ENCODE measurements at regions of chr2 and their contacts with region 1.

Region 1: DNA sequence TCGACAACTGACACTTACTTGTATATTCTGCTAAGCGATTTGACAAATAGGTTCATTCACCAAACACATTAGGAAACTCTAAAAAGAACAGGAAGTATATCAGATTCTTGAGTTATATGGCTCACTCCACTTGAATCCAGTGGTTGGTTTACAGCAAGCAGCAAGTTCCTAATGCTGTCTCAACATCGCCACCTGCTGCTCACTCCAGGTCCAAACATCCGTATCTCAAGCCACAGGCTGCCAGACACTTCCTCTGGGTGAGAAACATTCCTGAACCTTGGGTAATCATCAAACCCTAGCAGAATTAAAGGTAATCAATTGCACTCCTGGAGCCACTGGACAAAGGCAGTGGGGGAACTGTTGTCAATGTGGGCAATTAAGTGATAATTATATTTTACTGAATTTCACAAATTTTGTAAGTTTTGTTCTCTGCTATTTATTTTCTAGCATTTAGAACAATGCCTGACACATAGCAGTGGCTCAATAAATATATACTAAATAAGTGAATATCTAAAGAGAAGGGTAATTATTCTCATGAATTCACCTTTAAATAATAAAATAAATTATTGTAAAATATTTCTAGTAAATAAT is 107.1 kb upstream of the TTN start:
- DNase-seq: peak; percentile 41 to 79 (median 62)
- ATAC-seq: peak; percentile 72
- H3K4me3 ChIP-seq: no peak overlapping the region
- H3K4me3 Mint-ChIP-seq: no peak overlapping the region
- H3K27ac ChIP-seq: no peak overlapping the region
- H3K27ac Mint-ChIP-seq: no peak overlapping the region
- H3K4me1 ChIP-seq: no peaks in the 10 kb centered on the region
- H3K4me1 Mint-ChIP-seq: peaks cover 5% of the 10 kb centered on the region
- H3K27me3 ChIP-seq: no peaks in the 10 kb centered on the region
- H3K27me3 Mint-ChIP-seq: no peaks in the 10 kb centered on the region
- CTCF ChIP-seq: peak; percentile 81

Region 2: DNA sequence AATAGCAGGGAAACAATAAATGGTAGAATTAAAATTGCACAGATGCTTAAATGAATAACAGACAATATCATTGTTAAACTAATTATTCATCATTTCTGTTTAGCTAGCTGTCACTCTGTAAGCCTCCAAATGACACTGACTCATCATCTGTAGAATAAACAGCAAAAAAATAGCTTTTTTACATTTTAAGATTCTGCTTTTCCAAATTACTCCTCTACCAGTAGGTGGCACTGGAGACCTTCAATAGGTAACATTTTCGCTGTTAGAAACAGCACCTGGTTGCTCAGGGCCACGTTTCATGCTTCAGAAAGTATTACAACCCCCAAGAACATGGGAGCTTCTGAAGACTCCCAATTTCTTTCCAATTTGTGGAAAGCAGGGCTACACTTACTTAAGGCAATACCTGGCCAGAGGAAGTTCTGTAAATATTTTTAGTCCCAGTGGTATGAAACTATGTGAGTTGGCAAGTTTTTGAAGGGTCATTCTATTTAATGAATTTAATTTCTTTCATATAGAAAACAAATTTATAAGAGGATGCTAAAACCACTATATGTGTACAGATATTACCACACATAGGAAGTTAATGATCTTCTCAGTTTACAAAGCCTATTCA is 152.5 kb before region 1 on chr2:
- CTCF ChIA-PET with region 1: no interaction called
- POLR2A ChIA-PET with region 1: no interaction called
- intact Hi-C with region 1: loop called in 1 of 2 experiments (anchors 10 kb)
- DNase-seq: peak in 6 of 14 experiments; percentile 0 to 57 (median 32)
- ATAC-seq: peak; percentile 41
- H3K4me3 ChIP-seq: no peak overlapping the region
- H3K4me3 Mint-ChIP-seq: no peak overlapping the region
- H3K27ac ChIP-seq: no peak overlapping the region
- H3K27ac Mint-ChIP-seq: no peak overlapping the region
- H3K4me1 ChIP-seq: no peaks in the 10 kb centered on the region
- H3K4me1 Mint-ChIP-seq: no peaks in the 10 kb centered on the region
- H3K27me3 ChIP-seq: no peaks in the 10 kb centered on the region
- H3K27me3 Mint-ChIP-seq: no peaks in the 10 kb centered on the region
- CTCF ChIP-seq: peak; percentile 85

Region 3: GRCh38 chr2:178796079-178796677 is 118.2 kb before region 1 on chr2:
- CTCF ChIA-PET with region 1: no interaction called
- POLR2A ChIA-PET with region 1: no interaction called
- intact Hi-C with region 1: loop called (anchors 1 kb)
- DNase-seq: peak in 3 of 14 experiments; percentile 30 to 43 (median 34)
- ATAC-seq: no peak
- H3K4me3 ChIP-seq: no peak overlapping the region
- H3K4me3 Mint-ChIP-seq: no peak overlapping the region
- H3K27ac ChIP-seq: no peak overlapping the region
- H3K27ac Mint-ChIP-seq: no peak overlapping the region
- H3K4me1 ChIP-seq: no peaks in the 10 kb centered on the region
- H3K4me1 Mint-ChIP-seq: no peaks in the 10 kb centered on the region
- H3K27me3 ChIP-seq: no peaks in the 10 kb centered on the region
- H3K27me3 Mint-ChIP-seq: no peaks in the 10 kb centered on the region
- CTCF ChIP-seq: peak; percentile 76

Region 4: DNA sequence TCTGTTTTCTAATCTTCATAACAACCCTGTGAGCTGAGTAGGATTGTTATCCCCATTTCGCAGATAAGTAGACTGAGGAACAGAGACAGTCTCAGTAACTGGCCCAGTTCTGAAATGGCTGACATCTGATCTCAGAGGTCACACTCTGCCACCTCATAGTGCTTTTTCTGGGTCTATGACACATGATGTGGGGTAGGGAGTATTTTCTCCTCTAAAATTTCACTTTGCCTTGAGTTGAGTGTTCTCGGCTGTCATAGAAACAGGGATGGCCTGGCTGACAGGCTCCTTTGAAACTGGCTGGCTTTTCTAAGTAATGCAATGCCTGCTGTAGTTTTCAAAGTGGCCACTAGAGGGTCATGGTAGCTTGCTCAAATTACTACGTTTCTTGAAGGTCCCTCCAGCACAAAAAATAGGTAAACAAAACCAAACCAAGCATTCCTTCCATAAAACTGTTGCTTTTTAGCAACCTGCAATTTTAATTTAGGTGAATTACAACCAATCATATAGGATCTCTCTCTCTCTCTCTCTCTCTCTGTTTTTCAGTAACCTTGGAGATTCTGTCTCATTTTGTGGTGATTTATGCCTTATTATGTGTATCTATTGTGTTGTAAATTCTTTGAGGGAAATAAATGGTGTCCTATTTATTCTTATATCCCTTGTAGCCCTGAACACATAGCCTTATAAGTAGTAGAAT is 22.9 kb before region 1 on chr2:
- CTCF ChIA-PET with region 1: no interaction called
- POLR2A ChIA-PET with region 1: no interaction called
- intact Hi-C with region 1: loop called in 1 of 2 experiments (anchors 1 kb)
- DNase-seq: peak; percentile 1 to 76 (median 46)
- ATAC-seq: peak; percentile 71
- H3K4me3 ChIP-seq: no peak overlapping the region
- H3K4me3 Mint-ChIP-seq: no peak overlapping the region
- H3K27ac ChIP-seq: no peak overlapping the region
- H3K27ac Mint-ChIP-seq: no peak overlapping the region
- H3K4me1 ChIP-seq: no peaks in the 10 kb centered on the region
- H3K4me1 Mint-ChIP-seq: peaks cover 5% of the 10 kb centered on the region
- H3K27me3 ChIP-seq: no peaks in the 10 kb centered on the region
- H3K27me3 Mint-ChIP-seq: no peaks in the 10 kb centered on the region
- CTCF ChIP-seq: peak; percentile 93

Region 5: GRCh38 chr2:178949584-178949983 is 35.2 kb after region 1 on chr2:
- CTCF ChIA-PET with region 1: no interaction called
- POLR2A ChIA-PET with region 1: no interaction called
- intact Hi-C with region 1: no loop called
- DNase-seq: no peak
- ATAC-seq: no peak
- H3K4me3 ChIP-seq: no peak overlapping the region
- H3K4me3 Mint-ChIP-seq: no peak overlapping the region
- H3K27ac ChIP-seq: no peak overlapping the region
- H3K27ac Mint-ChIP-seq: no peak overlapping the region
- H3K4me1 ChIP-seq: no peaks in the 10 kb centered on the region
- H3K4me1 Mint-ChIP-seq: no peaks in the 10 kb centered on the region
- H3K27me3 ChIP-seq: no peaks in the 10 kb centered on the region
- H3K27me3 Mint-ChIP-seq: no peaks in the 10 kb centered on the region
- CTCF ChIP-seq: no peak